HEK293 (cell line): ENCODE measurements at regions of chr1 and their contacts with region 1.

Region 1: GRCh38 chr1:235783148-235783776 is 83.4 kb downstream of the LYST start:
- H3K4me3 ChIP-seq: no peak overlapping the region
- H3K27ac ChIP-seq: no peak overlapping the region
- H3K4me1 ChIP-seq: no peaks in the 10 kb centered on the region
- CTCF ChIP-seq: peak; percentile 36; the same call in 1 of the 2 replicates

Region 2: DNA sequence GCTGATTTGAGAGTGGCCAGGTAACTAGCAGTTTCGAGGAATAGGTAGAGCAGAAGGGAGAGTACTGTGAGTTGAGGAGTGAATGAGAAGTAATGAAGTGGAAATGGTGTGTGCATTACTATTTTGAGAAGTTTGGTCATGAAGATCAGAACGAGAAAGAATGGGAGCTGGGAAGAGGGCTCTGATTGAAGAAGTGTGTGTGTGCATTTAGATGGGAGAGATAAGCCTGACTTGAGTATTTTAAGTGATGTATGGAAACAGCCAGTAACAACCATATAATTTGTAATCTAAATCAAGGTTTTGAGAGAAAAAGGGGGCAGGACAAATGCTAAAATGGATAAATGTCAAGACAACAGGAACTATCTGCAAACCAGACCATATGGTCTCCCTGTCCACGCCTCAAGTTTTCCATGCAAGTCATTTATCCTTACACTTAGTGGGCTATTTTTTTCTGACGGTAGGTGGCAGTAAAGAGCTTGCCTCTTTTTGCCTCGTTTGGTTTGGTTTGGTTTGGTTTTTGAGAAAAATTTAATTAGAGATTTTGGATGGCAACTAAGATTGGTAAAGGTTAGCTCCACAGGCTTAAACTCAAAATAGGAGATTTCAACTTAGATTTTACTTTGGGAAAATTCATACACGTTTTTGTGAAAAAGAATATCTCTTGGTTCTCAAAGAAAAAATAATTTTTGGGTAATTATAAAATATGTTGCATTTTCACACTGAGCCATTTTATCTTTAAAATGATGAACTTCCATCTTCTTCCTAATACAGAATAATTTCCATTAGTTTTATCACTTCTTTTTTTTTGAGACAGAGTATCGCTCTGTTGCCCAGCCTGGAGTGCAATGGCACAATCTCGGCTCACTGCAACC is 269.5 kb before region 1 on chr1:
- CTCF ChIA-PET with region 1: interaction called, 38 read pairs
- POLR2A ChIA-PET with region 1: no interaction called
- H3K4me3 ChIP-seq: no peak overlapping the region
- H3K27ac ChIP-seq: no peak overlapping the region
- H3K4me1 ChIP-seq: no peaks in the 10 kb centered on the region
- CTCF ChIP-seq: peak; percentile 61; the same call in 1 of the 2 replicates

Region 3: GRCh38 chr1:235767795-235768194 is 15.5 kb before region 1 on chr1:
- CTCF ChIA-PET with region 1: interaction called, 26 read pairs
- POLR2A ChIA-PET with region 1: interaction called, 6 read pairs
- H3K4me3 ChIP-seq: no peak overlapping the region
- H3K27ac ChIP-seq: no peak overlapping the region
- H3K4me1 ChIP-seq: no peaks in the 10 kb centered on the region
- CTCF ChIP-seq: no peak

Region 4: DNA sequence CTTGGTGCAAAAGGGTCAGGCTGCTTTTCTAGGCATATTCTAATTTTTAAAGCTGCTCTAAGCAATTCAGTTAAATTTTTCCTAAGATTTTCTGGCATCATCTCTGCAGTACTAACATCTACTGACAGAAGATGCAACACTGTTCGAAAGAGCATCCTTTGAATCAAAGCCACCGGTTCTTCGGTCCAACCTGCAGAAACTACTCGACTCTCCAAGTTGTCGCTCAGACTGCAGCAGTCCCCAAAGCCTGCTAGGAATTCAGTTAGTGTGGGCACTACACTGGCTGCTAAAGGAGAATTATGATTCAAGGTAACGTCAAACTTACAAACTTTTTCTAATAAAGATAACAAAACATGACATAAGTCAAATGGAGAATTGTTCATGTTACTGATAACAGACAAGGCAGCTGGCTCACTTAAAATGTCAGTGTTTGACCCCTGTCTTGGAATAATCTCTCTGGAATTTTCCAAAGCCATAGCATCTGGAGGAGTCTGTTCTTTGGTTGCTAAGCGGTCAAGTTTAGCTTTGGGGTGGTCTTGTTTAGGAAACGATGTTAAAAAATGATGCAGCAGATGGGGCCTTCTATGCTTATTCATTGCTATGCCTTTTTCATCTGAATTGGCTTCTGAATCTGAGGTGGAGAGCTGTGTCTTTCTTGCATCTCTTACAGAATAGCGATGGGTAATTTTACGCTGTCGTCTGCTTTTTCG is 26.6 kb after region 1 on chr1:
- CTCF ChIA-PET with region 1: interaction called, 19 read pairs
- POLR2A ChIA-PET with region 1: no interaction called
- H3K4me3 ChIP-seq: no peak overlapping the region
- H3K27ac ChIP-seq: no peak overlapping the region
- H3K4me1 ChIP-seq: peaks cover 2% of the 10 kb centered on the region; the same call in 1 of the 2 replicates
- CTCF ChIP-seq: no peak

Region 5: DNA sequence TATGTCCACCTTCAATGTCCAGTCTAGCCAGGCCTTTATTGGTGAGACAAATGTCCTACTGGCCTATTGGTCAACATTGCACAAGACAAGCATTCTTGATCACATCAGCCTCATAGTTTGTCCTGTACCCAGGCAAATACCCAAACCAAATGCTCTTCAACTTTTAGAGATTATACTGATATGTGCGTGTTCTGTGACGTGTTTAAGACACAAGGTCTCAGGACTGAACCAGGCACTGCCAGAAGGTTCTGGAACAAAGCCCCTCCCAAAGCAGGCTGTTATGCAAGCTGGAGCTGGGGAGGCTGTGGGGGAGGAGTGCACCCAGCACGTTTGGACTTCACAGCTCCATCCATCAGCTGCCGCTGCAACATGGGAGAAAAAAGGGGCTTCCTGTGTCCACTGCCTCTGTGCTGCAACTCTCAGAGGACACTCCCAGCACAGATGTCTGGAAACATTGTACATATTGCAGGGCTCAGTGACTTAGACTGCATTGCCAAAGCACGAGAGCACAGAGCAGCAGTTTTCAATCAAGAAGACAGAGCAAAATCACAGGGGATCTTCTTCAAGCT is 235.7 kb after region 1 on chr1:
- CTCF ChIA-PET with region 1: no interaction called
- POLR2A ChIA-PET with region 1: no interaction called
- H3K4me3 ChIP-seq: no peak overlapping the region
- H3K27ac ChIP-seq: no peak overlapping the region
- H3K4me1 ChIP-seq: no peaks in the 10 kb centered on the region
- CTCF ChIP-seq: no peak